Dendritic cell treated with granulocyte-macrophage colony-stimulating factor and Interleukin-4, amounts not matched to agents 40 ng/mL and 50 ng/mL, for 4 days (primary cell): ENCODE measurements at regions of chr6 and their contacts with region 1.

Region 1: GRCh38 chr6:36196880-36197548 is 470 bp downstream of the BRPF3 start:
- H3K4me3 Mint-ChIP-seq: peak overlapping the region; percentile 88
- H3K27ac Mint-ChIP-seq: peak overlapping the region; percentile 87
- H3K4me1 Mint-ChIP-seq: peaks cover 19% of the 10 kb centered on the region
- H3K27me3 Mint-ChIP-seq: no peaks in the 10 kb centered on the region

Region 2: GRCh38 chr6:36027501-36028087 is 169.4 kb before region 1 on chr6 and contains the start of gene MAPK14:
- intact Hi-C with region 1: loop called (anchors 2 kb)
- H3K4me3 Mint-ChIP-seq: peak within 1 kb of the TSS; percentile 88
- H3K27ac Mint-ChIP-seq: peak within 1 kb of the TSS; percentile 91
- H3K4me1 Mint-ChIP-seq: peaks cover 39% of the 10 kb centered on the region
- H3K27me3 Mint-ChIP-seq: peaks cover 2% of the 10 kb centered on the region

Region 3: DNA sequence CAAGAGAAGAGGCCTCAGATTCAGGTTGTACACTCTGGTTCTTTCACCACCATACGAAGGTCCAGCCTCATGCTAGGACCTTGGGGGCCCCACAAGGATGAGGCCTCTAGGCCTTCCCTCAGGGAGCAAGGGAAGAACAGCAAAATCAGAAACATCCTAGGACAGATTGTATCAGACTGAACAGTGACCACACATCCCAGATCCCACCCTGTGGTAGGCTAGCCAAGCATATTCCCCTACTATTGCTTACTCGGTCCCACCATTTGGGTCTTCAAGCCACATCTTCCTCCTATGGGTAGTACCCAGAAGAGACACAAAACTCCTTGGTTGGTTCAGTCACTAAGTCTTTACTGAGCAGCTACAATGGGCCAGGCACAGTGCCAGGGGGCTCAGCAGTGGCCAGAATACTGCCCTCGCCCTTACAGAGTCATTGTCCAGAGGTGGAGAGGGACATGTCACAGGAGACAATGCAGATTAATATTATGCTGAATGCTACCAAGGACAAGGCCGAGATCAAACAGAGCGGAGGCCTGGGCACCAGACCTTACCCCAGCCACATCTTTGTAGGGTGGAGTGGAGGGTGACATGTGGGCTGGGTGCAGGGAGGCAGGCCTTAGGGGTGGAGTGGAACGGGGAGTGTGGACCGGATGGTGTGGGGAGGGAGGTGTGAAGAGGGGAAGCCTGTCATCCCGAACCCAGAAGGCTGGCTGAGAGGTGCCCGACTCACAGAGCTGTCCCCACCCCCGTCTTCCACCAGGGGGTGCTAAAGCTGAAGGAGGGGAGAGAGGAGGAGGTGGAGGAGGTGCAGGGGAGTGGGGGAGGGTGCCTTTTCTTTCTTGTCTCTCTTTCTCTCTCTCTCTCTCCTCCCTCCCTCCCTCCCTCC is 73.5 kb before region 1 on chr6:
- intact Hi-C with region 1: loop called (anchors 1 kb)
- H3K4me3 Mint-ChIP-seq: no peak overlapping the region
- H3K27ac Mint-ChIP-seq: peak overlapping the region; percentile 74
- H3K4me1 Mint-ChIP-seq: peaks cover 84% of the 10 kb centered on the region
- H3K27me3 Mint-ChIP-seq: no peaks in the 10 kb centered on the region